ENCODE measurements at regions of chr4 and their contacts with region 1.

Region 1: GRCh38 chr4:44678094-44679041 is at the start of gene GUF1:
- DNase-seq: peak; percentile 89 to 92 (median 90)
- H3K4me3 ChIP-seq: peak within 1 kb of the TSS; percentile 80 to 87
- H3K4me3 Mint-ChIP-seq: peak within 1 kb of the TSS; percentile 92 to 99 (median 97)
- H3K27ac ChIP-seq: peak within 1 kb of the TSS; percentile 91
- H3K27ac Mint-ChIP-seq: peak within 1 kb of the TSS; percentile 96 to 99 (median 98)
- H3K4me1 ChIP-seq: peaks cover 29% of the 10 kb centered on the region
- H3K4me1 Mint-ChIP-seq: peaks cover 18 to 50% (median 27%) of the 10 kb centered on the region in 4 donors
- H3K27me3 ChIP-seq: no peaks in the 10 kb centered on the region
- H3K27me3 Mint-ChIP-seq: no peaks in the 10 kb centered on the region
- total RNA-seq, gene GUF1: 20.5 to 24.2 TPM

Region 2: GRCh38 chr4:44701037-44701436 is 22.7 kb after region 1 on chr4:
- CTCF ChIA-PET with region 1: no interaction called
- POLR2A ChIA-PET with region 1: interaction called, 12 read pairs
- intact Hi-C with region 1: no loop called
- DNase-seq: no peak
- H3K4me3 ChIP-seq: no peak overlapping the region
- H3K4me3 Mint-ChIP-seq: no peak overlapping the region
- H3K27ac ChIP-seq: no peak overlapping the region
- H3K27ac Mint-ChIP-seq: peak overlapping the region in 2 of 7 donors; percentile 4 to 73
- H3K4me1 ChIP-seq: no peaks in the 10 kb centered on the region
- H3K4me1 Mint-ChIP-seq: no peaks in the 10 kb centered on the region
- H3K27me3 ChIP-seq: no peaks in the 10 kb centered on the region
- H3K27me3 Mint-ChIP-seq: no peaks in the 10 kb centered on the region

Region 3: DNA sequence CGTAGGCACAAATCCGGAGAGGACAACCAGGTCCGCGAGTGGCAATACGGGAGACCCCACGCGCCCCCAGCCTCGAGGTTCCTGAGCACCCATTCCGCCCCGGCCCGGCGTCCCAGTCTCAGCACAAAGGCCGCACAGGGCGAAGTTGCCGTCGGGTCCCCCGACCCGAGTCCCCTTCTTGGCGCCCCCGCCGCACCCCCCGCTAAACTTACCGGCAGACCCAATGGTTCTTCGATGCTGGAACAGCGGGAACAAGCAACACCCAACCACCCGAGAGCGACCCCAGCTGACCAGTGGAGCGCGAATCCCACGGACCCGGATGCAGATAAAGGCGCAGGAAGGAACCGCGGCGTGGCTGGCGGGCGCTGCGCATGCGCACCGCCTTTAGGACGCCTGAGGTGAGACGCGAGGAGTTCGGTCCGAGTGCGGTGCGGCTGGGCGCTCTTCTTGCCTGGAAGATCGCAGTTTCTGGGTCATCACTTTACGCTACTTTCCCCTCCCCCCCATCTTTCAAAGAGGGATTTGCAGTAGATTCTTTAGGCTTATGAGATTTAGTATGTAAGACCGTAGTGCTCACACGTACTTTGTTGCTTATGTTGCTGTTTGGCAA is 48.0 kb after region 1 on chr4 and contains the start of gene GNPDA2:
- CTCF ChIA-PET with region 1: interaction called, 4 read pairs
- POLR2A ChIA-PET with region 1: interaction called, 60 read pairs
- intact Hi-C with region 1: loop called (anchors 1 kb)
- DNase-seq: peak; percentile 82 to 83 (median 82)
- H3K4me3 ChIP-seq: peak within 1 kb of the TSS; percentile 72 to 94
- H3K4me3 Mint-ChIP-seq: peak within 1 kb of the TSS; percentile 90 to 95 (median 94)
- H3K27ac ChIP-seq: peak within 1 kb of the TSS; percentile 56
- H3K27ac Mint-ChIP-seq: peak within 1 kb of the TSS; percentile 57 to 98 (median 87)
- H3K4me1 ChIP-seq: peaks cover 37% of the 10 kb centered on the region
- H3K4me1 Mint-ChIP-seq: peaks cover 27 to 43% (median 37%) of the 10 kb centered on the region in 4 donors
- H3K27me3 ChIP-seq: no peaks in the 10 kb centered on the region
- H3K27me3 Mint-ChIP-seq: peaks cover under 1 to 1% of the 10 kb centered on the region in 2 donors
- total RNA-seq, gene GNPDA2: 12.5 to 15.1 TPM